Activated T-helper 2 cell treated with anti-CD3 and anti-CD28 coated beads, Interferon-gamma antibody, Interleukin-2, Interleukin-4, amounts not matched to agents 10 μg/mL and 5 μg/mL and 100 μg/mL, durations not matched to agents 14 hours and 24 hours and 36 hours (primary cell): ENCODE measurements at regions of chr12 and their contacts with region 1.

Region 1: DNA sequence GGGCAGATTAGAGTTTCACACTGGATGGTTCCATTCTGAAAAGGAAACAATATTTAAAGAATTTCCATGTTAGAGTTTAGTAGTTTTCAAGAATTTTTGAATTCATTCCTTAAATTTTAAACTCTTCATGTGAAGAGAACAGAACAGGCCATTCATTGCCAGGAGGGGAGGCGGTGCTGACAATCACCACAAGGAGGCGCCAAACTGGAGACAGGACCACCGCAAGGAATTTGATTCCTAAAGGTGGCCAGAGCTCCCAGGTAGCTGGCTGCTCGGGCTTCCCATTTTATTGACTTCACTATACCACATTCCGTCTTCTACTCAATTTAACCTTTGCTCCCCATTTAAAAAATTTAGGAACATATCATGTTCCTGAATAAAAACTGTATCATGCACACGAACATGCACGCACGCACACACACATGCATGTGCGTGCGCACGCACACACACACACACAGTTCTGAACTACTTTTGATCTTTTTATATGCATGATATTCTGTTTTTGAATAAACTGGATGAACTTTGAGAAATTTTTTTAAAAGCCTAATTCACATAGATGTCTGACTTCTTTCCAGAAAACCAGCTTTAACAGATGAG is 101.2 kb downstream of the NELL2 start:
- DNase-seq: peak; percentile 16
- H3K4me3 Mint-ChIP-seq: no peak overlapping the region
- H3K27ac Mint-ChIP-seq: no peak overlapping the region
- H3K4me1 Mint-ChIP-seq: no peaks in the 10 kb centered on the region
- H3K27me3 Mint-ChIP-seq: no peaks in the 10 kb centered on the region

Region 2: DNA sequence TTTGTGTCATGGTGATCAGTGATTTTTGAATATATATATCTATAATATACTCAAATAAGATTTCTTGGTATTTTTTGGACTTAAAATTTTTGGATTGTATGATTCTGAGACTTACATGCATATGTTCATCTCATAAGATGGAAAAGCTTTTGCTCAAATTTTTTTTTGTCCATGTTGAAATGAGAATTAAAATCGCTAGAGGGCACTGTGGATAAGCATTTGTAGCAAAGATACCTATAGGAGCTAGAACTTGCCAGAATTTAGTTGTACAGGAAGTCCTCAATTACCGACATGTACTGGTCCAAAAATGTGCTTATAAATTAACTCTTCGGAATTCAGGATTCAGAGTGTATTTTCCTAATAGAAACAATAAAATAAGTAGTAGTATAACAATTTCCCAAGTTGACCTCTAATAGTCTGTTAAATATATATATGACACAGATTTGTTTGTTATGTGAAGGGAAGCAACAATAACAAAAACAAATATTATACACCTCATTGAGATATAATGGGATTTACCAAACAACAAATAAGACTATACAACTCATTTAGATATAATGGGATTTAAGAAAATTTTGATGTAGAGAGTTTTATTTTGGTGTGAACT is 759.5 kb before region 1 on chr12:
- intact Hi-C with region 1: loop called (anchors 5 kb)
- DNase-seq: no peak
- H3K4me3 Mint-ChIP-seq: no peak overlapping the region
- H3K27ac Mint-ChIP-seq: no peak overlapping the region
- H3K4me1 Mint-ChIP-seq: no peaks in the 10 kb centered on the region
- H3K27me3 Mint-ChIP-seq: no peaks in the 10 kb centered on the region

Region 3: DNA sequence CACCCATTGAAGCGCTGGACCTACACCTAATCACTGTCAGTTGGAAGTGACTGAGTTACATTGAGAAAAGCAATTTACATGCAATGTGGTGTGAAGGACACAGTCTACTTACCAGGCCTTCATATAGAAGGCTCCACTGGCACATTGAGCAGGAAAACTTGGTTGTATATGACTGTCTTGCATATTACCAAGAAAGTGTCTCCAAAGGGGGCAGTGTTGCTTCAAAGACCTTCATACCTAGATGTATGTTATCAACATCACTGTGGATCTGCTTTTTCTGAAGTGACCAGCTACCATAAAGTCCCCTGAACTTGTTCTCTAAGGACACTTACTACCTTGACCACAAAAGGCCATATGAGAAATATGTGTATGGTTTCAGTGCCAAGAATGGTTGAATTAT is 37.1 kb after region 1 on chr12:
- intact Hi-C with region 1: loop called (anchors 5 kb)
- DNase-seq: no peak
- H3K4me3 Mint-ChIP-seq: no peak overlapping the region
- H3K27ac Mint-ChIP-seq: no peak overlapping the region
- H3K4me1 Mint-ChIP-seq: peaks cover 16% of the 10 kb centered on the region
- H3K27me3 Mint-ChIP-seq: no peaks in the 10 kb centered on the region

Region 4: GRCh38 chr12:44835641-44836379 is 60.9 kb after region 1 on chr12:
- intact Hi-C with region 1: no loop called
- DNase-seq: no peak
- H3K4me3 Mint-ChIP-seq: no peak overlapping the region
- H3K27ac Mint-ChIP-seq: peak overlapping the region; percentile 72
- H3K4me1 Mint-ChIP-seq: peaks cover 52% of the 10 kb centered on the region
- H3K27me3 Mint-ChIP-seq: no peaks in the 10 kb centered on the region

Region 5: DNA sequence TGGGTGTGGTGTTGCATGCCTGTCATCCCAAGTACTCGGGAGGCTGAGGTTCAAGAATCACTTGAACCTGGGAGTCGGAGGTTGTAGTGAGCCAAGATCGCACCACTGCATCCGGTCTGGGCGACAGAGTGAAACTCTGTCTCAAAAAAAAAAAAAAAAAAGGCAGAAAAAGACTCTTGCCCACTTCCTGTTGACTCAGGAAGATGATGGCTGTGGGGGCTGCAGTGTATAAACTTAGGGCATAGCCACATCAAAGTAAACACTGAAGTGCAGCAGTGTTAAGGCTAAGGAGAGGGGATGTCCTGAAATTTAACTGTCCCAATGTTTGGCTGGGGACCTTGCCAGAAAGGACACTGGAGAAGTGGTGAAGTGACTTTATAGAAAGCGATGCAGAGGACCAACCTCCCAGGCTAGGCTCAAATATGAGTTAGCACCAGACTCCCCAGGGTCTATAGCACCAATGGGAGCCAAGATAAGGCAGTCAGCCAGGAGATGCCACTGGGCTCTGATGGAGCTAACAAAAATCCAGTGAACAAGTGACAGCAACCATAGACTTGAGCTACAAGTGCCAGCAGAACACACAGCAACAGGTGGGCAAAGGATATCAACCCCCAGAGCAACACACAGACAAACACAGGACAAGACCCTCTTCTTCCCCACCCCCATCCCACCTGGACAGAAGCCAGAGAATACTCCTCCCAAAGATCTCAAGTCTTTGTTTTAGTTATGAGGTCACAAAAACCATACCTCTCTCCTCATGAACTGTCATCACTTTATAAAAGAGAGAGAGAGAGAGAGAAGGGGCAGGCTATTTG is 73.2 kb after region 1 on chr12:
- intact Hi-C with region 1: no loop called
- DNase-seq: peak; percentile 60
- H3K4me3 Mint-ChIP-seq: peak overlapping the region; percentile 46
- H3K27ac Mint-ChIP-seq: peak overlapping the region; percentile 90
- H3K4me1 Mint-ChIP-seq: peaks cover 60% of the 10 kb centered on the region
- H3K27me3 Mint-ChIP-seq: no peaks in the 10 kb centered on the region

Region 6: GRCh38 chr12:44875954-44876553 is 101.1 kb after region 1 on chr12 and contains the start of gene NELL2:
- intact Hi-C with region 1: loop called (anchors 2 kb)
- DNase-seq: peak; percentile 33
- H3K4me3 Mint-ChIP-seq: peak within 1 kb of the TSS; percentile 93
- H3K27ac Mint-ChIP-seq: no peak within 1 kb of the TSS
- H3K4me1 Mint-ChIP-seq: peaks cover 26% of the 10 kb centered on the region
- H3K27me3 Mint-ChIP-seq: peaks cover 39% of the 10 kb centered on the region
- total RNA-seq, gene NELL2: 7.7 and 10.2 TPM in 2 replicates

Region 7: GRCh38 chr12:44930972-44931600 is 156.2 kb after region 1 on chr12:
- intact Hi-C with region 1: loop called (anchors 1 kb)
- DNase-seq: no peak
- H3K4me3 Mint-ChIP-seq: no peak overlapping the region
- H3K27ac Mint-ChIP-seq: no peak overlapping the region
- H3K4me1 Mint-ChIP-seq: peaks cover 1% of the 10 kb centered on the region
- H3K27me3 Mint-ChIP-seq: no peaks in the 10 kb centered on the region

Region 8: GRCh38 chr12:45138609-45139008 is 363.7 kb after region 1 on chr12:
- intact Hi-C with region 1: no loop called
- DNase-seq: no peak
- H3K4me3 Mint-ChIP-seq: no peak overlapping the region
- H3K27ac Mint-ChIP-seq: no peak overlapping the region
- H3K4me1 Mint-ChIP-seq: no peaks in the 10 kb centered on the region
- H3K27me3 Mint-ChIP-seq: peaks cover 11% of the 10 kb centered on the region